SK-N-SH (cell line): ENCODE measurements at regions of chr2 and their contacts with region 1.

Region 1: DNA sequence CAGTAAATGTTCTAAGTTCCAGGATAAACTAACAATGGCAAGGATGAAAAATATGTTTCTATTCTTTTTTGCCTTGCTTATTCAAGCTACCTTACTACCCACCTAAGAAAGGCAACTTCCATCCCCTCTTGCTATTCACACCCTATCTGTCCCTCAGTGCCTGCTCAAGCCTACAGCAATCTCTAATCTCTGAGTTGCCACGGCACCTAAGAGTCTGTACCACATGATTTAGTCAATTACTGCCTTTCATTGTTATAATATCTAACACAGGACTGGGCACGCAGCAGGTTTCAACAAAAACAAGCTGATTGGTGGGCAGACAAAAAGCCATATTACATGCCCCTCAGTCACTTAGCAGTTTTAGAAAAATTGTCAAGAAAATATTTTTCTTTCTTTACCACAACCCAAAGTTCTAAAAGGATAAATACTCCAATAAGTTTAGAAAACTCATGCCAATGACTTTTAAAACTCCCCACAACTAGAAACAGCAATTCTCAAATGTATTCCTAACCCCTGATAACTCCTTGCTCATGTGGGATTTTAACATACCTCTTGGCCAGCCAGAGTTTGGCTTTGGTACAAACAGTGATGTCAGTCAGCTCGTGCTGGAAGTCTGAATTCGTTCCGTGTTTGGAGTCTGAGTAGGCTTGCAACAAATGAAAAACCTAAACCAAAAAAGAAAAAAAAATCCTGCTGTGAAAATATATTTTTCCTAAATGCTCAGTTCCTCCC is 117.3 kb upstream of the ZFP36L2 start:
- DNase-seq: no peak
- H3K4me3 ChIP-seq: no peak overlapping the region
- H3K27ac ChIP-seq: peak overlapping the region; percentile 76 to 100
- H3K4me1 ChIP-seq: peaks cover 45 to 75% of the 10 kb centered on the region in 2 experiments
- H3K27me3 ChIP-seq: no peaks in the 10 kb centered on the region
- CTCF ChIP-seq: no peak
- EP300 ChIP-seq: peak; percentile 11 to 50; a peak in 2 of 4 replicates
- RAD21 ChIP-seq: no peak; the same call in 1 of the 2 replicates

Region 2: DNA sequence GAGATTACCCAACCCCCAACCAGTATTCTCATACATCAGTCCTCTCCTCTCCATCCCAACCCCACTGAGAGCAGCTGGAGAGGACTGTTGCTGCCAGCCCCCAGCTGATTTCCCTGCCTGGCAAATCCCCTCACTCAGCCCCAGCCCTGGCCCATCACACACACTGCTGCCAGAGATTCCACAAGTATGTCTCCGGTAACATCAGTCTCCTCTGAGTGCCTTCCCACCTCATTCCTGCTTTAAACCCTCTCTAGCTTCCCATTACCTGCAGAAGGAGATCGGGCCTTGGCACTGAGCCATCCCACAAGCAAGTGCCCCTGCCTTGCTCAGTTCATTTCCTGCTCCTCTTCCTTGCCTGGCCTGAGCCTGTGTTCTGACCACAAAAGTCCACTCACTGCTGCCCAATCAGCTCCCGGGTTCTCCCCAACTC is 66.8 kb before region 1 on chr2:
- CTCF ChIA-PET with region 1: interaction called, 10 read pairs
- POLR2A ChIA-PET with region 1: interaction called, 3 read pairs
- DNase-seq: peak; percentile 56
- H3K4me3 ChIP-seq: no peak overlapping the region
- H3K27ac ChIP-seq: peak overlapping the region; percentile 42 to 95; a peak in 3 of 4 replicates
- H3K4me1 ChIP-seq: peaks cover 39 to 58% of the 10 kb centered on the region in 2 experiments
- H3K27me3 ChIP-seq: no peaks in the 10 kb centered on the region
- CTCF ChIP-seq: no peak
- EP300 ChIP-seq: no peak; a peak in 1 of 4 replicates
- RAD21 ChIP-seq: no peak

Region 3: GRCh38 chr2:43312755-43313641 is 30.7 kb before region 1 on chr2:
- CTCF ChIA-PET with region 1: interaction called, 19 read pairs
- POLR2A ChIA-PET with region 1: interaction called, 8 read pairs
- DNase-seq: peak; percentile 49
- H3K4me3 ChIP-seq: no peak overlapping the region
- H3K27ac ChIP-seq: peak overlapping the region; percentile 47 to 98; a peak in 3 of 4 replicates
- H3K4me1 ChIP-seq: peaks cover 10 to 22% of the 10 kb centered on the region in 2 experiments
- H3K27me3 ChIP-seq: no peaks in the 10 kb centered on the region
- CTCF ChIP-seq: no peak
- EP300 ChIP-seq: peak; percentile 72 to 92
- RAD21 ChIP-seq: peak; percentile 16

Region 4: DNA sequence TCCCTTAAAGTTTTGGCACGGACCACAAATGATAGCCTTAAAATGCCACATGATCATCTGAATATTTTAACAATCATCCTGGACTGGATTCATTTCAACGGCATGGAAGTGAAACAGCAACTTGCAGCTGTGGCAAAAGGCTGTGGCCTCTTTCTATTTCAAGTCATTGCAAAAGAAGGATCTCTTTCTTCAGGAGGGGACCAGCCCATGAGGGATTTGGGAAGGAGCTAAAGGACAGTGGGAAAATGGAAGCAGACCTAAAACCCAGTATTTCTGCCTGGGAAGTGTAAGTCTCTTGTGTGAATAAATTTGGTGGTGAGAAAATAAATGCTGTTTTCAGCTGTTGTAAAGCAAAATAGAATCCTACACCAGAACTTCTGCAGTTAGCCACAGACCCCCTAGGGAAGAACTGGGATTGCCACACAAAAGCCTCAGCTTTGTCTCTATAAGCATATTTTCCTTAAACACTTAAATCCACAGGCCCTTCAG is 10.0 kb before region 1 on chr2:
- CTCF ChIA-PET with region 1: interaction called, 20 read pairs
- POLR2A ChIA-PET with region 1: no interaction called
- DNase-seq: no peak
- H3K4me3 ChIP-seq: no peak overlapping the region
- H3K27ac ChIP-seq: peak overlapping the region; percentile 8 to 56; a peak in 3 of 4 replicates
- H3K4me1 ChIP-seq: peaks cover 9 to 40% of the 10 kb centered on the region in 2 experiments; a peak in 3 of 4 replicates
- H3K27me3 ChIP-seq: no peaks in the 10 kb centered on the region
- CTCF ChIP-seq: no peak
- EP300 ChIP-seq: no peak
- RAD21 ChIP-seq: no peak